ENCODE measurements at regions of chr2 and their contacts with region 1.

Region 1: DNA sequence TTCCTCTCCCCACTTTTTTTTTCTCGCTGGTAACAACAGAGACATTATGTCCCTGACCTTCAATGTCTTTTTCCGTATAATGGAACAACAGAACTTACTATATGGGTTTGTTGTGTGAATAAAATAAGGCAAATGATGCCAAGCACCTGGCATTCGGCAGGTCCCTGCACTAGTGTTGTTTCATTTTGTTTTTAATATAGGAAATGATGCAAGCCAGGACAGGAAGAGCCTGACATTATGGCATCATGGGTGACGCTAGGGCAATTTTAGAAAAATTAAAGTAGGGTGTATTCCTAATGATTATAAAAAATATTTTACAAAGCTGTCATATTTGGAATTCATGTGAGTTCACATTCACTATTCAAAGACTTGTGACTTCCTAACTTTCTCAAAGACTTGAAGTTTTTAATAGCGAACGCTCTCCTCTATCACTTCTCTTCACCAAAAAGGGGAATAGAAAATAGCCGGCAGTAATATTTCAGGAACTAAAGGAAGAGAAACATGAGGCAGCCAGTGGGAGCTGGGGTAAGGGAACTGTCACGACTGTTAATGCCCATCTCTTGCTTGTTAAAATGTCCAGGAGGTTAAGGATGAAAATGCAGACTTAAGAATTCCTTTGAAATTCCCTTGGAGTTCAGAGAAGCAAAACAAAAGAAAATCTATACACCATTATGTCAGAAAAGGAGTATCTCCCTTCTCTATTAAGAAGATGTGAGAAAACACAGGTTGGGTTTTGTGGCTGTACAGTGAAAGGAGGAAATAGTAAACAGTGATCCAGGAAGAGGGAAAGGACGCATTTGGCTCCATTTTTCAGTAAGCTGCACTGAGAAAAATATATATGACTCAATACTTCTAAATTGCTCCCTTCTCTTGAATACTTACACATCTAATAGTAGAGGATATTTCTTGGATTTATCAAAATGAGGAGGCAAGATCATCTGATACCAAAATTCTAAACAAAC is 60.2 kb downstream of the DPP4 start:
- DNase-seq: no peak
- H3K4me3 Mint-ChIP-seq: peak overlapping the region; percentile 81
- H3K27ac Mint-ChIP-seq: peak overlapping the region; percentile 95
- H3K4me1 Mint-ChIP-seq: peaks cover 95% of the 10 kb centered on the region
- H3K27me3 Mint-ChIP-seq: no peaks in the 10 kb centered on the region

Region 2: DNA sequence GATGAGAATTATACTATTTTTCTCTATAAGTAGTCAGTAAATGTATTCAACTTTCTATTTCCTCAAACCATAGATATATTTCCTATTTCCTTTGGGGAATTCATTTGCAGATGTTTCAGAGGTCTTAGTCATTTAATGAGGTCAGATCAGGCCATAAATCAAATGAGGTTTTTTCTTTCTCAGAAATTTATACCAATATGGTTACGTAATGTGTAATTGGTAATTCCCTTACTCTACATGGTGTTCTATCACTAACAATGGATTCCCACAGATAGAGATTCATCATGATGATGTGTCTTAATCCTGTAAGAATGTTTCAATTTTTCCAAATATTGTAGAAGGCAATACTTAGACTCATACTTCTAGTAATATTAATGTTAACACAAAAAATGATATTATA is 47.8 kb before region 1 on chr2:
- intact Hi-C with region 1: loop called (anchors 1 kb)
- DNase-seq: no peak
- H3K4me3 Mint-ChIP-seq: no peak overlapping the region
- H3K27ac Mint-ChIP-seq: peak overlapping the region; percentile 1
- H3K4me1 Mint-ChIP-seq: peaks cover 86% of the 10 kb centered on the region
- H3K27me3 Mint-ChIP-seq: no peaks in the 10 kb centered on the region

Region 3: DNA sequence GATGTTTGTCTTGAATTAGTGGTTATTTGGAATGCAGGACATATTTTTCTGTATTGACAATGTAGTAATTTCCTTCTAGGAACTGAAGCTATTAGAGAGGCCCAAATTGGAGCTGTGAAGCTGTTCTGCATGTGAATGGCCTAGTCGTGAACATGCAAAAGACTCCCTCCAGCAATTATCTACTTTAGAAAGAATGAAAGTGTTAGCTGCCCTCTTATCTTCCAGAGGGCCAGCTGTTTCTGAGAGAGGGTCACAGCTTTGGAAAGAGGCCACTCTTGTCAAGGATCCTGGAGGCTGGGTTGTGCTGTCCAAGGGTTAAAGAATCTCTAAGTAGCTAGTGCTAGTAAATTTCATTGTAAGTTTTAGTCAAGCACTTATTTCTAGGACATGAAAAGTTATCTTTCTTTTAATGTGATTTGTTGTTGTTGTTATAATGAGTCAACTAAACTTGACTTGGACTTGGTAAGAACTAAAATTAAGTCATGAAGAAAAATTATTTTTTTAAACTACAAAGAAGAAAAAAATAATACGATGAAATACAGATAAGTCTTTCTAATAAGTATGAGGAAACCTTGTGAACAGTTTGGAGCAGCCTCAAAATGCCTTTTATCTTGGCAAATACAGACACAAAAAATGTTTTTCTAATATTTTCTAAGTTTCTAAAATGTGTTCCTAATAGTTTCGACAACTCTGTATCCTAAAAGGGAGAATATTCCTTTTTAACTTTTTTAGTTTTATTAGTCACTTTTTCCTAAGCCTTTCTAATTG is 23.4 kb after region 1 on chr2:
- intact Hi-C with region 1: no loop called
- DNase-seq: no peak
- H3K4me3 Mint-ChIP-seq: no peak overlapping the region
- H3K27ac Mint-ChIP-seq: no peak overlapping the region
- H3K4me1 Mint-ChIP-seq: peaks cover 66% of the 10 kb centered on the region
- H3K27me3 Mint-ChIP-seq: no peaks in the 10 kb centered on the region